ENCODE measurements at regions of chr10 and their contacts with region 1.

Region 1: DNA sequence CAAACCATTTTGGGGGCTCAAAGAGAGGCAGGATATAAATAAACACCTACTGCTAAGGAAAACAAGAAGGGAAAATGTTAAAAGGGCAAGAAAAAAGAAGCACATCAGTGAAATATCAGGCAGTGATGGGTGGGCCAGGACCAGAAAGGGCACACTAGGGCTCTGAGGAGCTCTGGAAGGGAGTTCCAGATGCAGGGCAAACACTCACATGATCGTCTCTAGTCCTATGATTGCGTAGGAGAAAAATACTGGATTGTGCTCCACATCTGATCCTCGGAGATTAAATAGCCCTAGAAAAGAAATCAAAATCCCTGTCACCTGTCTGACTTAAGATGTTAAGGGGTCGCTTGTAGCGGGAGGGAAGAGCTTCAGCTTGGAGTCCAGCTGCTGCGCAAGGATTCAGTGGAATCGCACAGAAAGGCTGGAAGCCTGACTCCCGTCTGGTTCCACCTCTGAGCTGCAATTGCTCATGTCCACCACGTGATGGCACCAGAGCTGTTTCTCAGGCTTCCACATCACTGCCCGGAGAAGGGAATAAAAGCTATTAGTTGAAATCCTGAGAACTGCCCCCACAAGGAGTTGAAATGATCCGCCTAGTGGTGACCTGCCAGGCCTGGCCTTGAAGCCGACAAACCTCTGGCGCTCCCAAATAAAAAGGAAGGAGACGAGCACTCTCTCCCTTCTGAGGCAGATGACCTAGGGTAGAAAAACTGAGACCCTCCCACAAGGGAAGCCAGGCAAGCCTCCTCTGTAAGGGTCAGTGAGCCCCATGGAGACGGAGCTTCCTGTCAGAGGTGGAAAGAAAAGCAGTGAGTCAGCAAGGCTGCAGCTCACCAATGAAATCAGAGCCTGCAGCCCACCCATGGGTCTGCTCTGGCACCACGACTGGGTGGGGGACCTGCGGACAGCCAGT is 39.2 kb downstream of the XPNPEP1 start:
- DNase-seq: peak; percentile 84
- H3K4me3 ChIP-seq: no peak overlapping the region
- H3K27ac ChIP-seq: peak overlapping the region; percentile 61 to 80
- H3K4me1 ChIP-seq: peaks cover 9% of the 10 kb centered on the region
- H3K27me3 ChIP-seq: no peaks in the 10 kb centered on the region
- CTCF ChIP-seq: peak; percentile 92 to 96 (median 96)
- POLR2A ChIP-seq: no peak

Region 2: GRCh38 chr10:110129490-110129889 is 245.4 kb after region 1 on chr10:
- intact Hi-C with region 1: loop called (anchors 10 kb)
- DNase-seq: no peak
- H3K4me3 ChIP-seq: no peak overlapping the region
- H3K27ac ChIP-seq: no peak overlapping the region
- H3K4me1 ChIP-seq: no peaks in the 10 kb centered on the region
- H3K27me3 ChIP-seq: no peaks in the 10 kb centered on the region
- CTCF ChIP-seq: no peak
- POLR2A ChIP-seq: no peak

Region 3: GRCh38 chr10:110225756-110226542 is 341.8 kb after region 1 on chr10:
- intact Hi-C with region 1: loop called (anchors 10 kb)
- DNase-seq: peak; percentile 94
- H3K4me3 ChIP-seq: peak overlapping the region; percentile 76 to 87
- H3K27ac ChIP-seq: peak overlapping the region; percentile 91 to 97
- H3K4me1 ChIP-seq: peaks cover 13% of the 10 kb centered on the region
- H3K27me3 ChIP-seq: no peaks in the 10 kb centered on the region
- CTCF ChIP-seq: peak; percentile 55 to 84 (median 73)
- POLR2A ChIP-seq: no peak